ENCODE measurements at regions of chr3 and their contacts with region 1.

Region 1: DNA sequence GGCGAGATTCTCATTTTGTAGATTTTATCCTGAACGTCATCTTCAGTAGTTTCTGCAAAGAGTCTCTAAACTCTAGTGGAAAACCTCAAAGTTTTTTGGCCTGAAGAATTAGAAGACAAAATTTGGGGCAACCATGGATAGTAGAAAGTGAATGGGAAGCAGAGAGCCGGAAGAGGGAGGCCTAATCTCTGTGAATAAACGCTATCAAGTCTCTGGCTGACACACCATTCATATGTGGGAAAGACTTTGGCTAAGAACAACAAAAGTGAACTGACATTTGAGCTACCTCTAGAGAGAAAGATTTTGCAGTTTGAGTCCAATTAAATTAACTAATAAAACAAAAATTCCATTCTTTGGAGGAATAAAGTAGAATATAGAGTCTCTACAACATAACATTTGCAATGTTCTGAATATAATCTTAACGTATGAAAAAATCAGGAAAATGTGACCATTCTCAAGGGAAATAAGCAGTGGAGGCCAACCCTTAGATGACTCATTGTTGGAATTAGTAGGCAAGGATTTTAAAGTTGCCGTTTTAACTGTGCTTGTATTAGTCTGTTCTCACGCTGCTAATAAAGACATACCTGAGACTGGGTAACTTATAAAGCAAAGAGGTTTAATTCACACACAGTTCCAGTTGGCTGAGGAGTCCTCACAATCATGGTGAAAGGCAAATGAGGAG is 184.6 kb downstream of the C3orf38 start:
- DNase-seq: no peak
- ATAC-seq: no peak
- H3K4me3 ChIP-seq: no peak overlapping the region
- H3K4me3 Mint-ChIP-seq: no peak overlapping the region
- H3K27ac ChIP-seq: no peak overlapping the region
- H3K27ac Mint-ChIP-seq: no peak overlapping the region
- H3K4me1 ChIP-seq: no peaks in the 10 kb centered on the region
- H3K4me1 Mint-ChIP-seq: no peaks in the 10 kb centered on the region
- H3K27me3 ChIP-seq: no peaks in the 10 kb centered on the region
- H3K27me3 Mint-ChIP-seq: no peaks in the 10 kb centered on the region
- CTCF ChIP-seq: no peak

Region 2: GRCh38 chr3:88416436-88416835 is 82.1 kb after region 1 on chr3:
- CTCF ChIA-PET with region 1: no interaction called
- POLR2A ChIA-PET with region 1: no interaction called
- intact Hi-C with region 1: loop called in 1 of 2 experiments (anchors 2 kb)
- DNase-seq: no peak
- ATAC-seq: no peak
- H3K4me3 ChIP-seq: no peak overlapping the region
- H3K4me3 Mint-ChIP-seq: no peak overlapping the region
- H3K27ac ChIP-seq: no peak overlapping the region
- H3K27ac Mint-ChIP-seq: no peak overlapping the region
- H3K4me1 ChIP-seq: no peaks in the 10 kb centered on the region
- H3K4me1 Mint-ChIP-seq: no peaks in the 10 kb centered on the region
- H3K27me3 ChIP-seq: no peaks in the 10 kb centered on the region
- H3K27me3 Mint-ChIP-seq: no peaks in the 10 kb centered on the region
- CTCF ChIP-seq: no peak

Region 3: DNA sequence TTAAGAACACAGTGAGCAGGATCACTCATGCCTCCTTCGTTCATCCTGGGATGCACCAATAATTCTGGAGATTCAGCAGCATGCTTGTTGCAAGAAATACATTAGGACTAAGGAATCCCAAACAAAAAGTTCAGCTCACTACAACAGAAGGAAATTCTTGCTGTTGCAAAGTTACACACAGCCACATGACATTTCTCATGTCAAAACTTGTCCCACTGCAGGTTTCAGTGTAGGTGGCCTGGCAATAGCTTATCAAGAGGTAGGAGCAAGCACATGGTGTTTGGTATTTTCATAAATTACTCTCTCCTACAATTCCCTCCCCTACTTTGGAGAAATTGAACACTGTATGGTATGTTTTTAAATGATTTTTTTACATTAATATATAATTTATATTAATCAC is 373.5 kb after region 1 on chr3:
- CTCF ChIA-PET with region 1: no interaction called
- POLR2A ChIA-PET with region 1: no interaction called
- intact Hi-C with region 1: no loop called
- DNase-seq: no peak
- ATAC-seq: no peak
- H3K4me3 ChIP-seq: no peak overlapping the region
- H3K4me3 Mint-ChIP-seq: no peak overlapping the region
- H3K27ac ChIP-seq: no peak overlapping the region
- H3K27ac Mint-ChIP-seq: no peak overlapping the region
- H3K4me1 ChIP-seq: no peaks in the 10 kb centered on the region
- H3K4me1 Mint-ChIP-seq: no peaks in the 10 kb centered on the region
- H3K27me3 ChIP-seq: no peaks in the 10 kb centered on the region
- H3K27me3 Mint-ChIP-seq: no peaks in the 10 kb centered on the region
- CTCF ChIP-seq: no peak

Measured in CD8-positive, alpha-beta T cell (primary cell).